Right ventricle myocardium inferior (tissue), 1 donor: ENCODE measurements at regions of chr16 and their contacts with region 1.

Region 1: GRCh38 chr16:56637814-56638750 is at the start of gene MT1A:
- DNase-seq: peak; percentile 89
- ATAC-seq: peak; percentile 94
- total RNA-seq, gene MT1A: 2.9 TPM

Region 2: DNA sequence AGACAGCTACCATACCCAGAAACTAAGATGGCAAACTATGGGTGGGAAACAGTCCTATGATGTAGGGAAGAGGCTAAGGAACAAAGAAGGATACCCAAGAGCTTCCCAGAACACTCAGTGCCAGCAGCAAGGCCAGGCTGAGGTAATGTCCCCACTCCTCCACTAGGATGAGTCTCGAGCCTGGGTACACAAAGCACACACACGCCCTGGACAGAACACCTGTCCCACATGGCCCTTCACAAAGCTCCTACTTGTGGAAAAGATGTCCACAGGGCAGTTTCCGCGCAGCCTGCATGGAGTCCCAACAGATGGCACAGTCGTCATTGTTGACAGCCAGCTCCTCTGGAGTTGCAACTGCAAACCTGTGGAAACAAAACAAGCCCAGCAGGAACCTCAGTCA is 236.6 kb before region 1 on chr16:
- intact Hi-C with region 1: no loop called
- DNase-seq: no peak
- ATAC-seq: no peak

Region 3: DNA sequence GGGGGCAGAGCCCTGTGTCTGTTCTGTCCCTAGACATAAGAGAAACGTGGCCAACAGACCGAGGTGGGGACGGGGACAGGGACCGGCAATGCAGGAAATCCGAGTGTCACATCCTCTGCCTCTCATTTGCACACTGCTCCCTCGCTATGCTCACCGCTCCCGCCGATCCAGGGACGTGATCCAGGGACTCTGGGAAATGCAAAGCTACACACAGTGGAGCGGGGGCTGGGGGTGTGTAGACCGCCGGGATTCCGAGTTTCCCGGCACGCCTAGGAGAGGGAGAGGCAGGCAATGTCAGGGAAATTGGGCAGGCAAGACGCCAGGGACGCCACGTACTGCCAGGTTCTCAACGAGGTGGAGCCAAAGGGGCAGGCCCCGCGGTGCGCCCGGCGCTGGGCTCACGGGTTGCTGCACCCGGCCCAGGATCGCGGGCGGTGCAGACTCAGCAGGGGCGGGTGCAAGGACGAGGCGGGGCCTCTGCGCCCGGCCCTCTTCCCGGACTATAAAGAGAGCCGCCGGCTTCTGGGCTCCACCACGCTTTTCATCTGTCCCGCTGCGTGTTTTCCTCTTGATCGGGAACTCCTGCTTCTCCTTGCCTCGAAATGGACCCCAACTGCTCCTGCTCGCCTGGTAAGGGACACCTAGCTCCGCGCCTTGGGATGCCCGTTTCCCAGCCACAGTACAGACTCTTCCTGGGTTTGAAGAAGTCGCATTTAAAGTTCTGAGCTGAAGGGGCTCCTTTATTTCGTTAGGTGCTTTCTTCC is 44.0 kb after region 1 on chr16 and contains the start of gene MT1X:
- intact Hi-C with region 1: loop called (anchors 5 kb)
- DNase-seq: peak; percentile 96
- ATAC-seq: peak; percentile 95
- total RNA-seq, gene MT1X: 108 TPM